ENCODE measurements at regions of chr17 and their contacts with region 1.

Region 1: DNA sequence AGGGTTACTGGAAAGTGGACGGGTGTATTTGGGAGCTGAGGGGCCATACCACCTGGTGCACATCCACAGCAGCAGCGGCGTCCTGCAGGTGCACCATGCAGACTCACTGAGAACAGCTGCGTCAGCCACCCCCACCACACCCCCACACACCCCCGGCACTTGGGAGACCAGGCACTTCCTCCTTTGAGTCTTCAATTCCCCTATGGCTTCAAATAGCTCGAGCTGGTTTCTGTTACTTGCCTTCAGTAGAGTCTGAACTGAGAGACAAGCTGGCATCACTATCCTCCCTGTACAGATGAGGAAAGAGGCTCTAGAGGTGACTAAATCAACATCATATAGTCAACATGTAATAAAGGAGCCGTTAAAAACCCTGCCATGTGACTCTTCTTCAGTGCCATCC is 15.4 kb downstream of the CUEDC1 start:
- DNase-seq: peak; percentile 66
- H3K4me3 ChIP-seq: no peak overlapping the region
- H3K27ac ChIP-seq: peak overlapping the region; percentile 91 to 99 (median 97)
- H3K4me1 ChIP-seq: peaks cover 60 to 94% (median 79%) of the 10 kb centered on the region in 4 donors
- H3K27me3 ChIP-seq: no peaks in the 10 kb centered on the region
- CTCF ChIP-seq: no peak
- EP300 ChIP-seq: no peak
- POLR2A ChIP-seq: no peak

Region 2: DNA sequence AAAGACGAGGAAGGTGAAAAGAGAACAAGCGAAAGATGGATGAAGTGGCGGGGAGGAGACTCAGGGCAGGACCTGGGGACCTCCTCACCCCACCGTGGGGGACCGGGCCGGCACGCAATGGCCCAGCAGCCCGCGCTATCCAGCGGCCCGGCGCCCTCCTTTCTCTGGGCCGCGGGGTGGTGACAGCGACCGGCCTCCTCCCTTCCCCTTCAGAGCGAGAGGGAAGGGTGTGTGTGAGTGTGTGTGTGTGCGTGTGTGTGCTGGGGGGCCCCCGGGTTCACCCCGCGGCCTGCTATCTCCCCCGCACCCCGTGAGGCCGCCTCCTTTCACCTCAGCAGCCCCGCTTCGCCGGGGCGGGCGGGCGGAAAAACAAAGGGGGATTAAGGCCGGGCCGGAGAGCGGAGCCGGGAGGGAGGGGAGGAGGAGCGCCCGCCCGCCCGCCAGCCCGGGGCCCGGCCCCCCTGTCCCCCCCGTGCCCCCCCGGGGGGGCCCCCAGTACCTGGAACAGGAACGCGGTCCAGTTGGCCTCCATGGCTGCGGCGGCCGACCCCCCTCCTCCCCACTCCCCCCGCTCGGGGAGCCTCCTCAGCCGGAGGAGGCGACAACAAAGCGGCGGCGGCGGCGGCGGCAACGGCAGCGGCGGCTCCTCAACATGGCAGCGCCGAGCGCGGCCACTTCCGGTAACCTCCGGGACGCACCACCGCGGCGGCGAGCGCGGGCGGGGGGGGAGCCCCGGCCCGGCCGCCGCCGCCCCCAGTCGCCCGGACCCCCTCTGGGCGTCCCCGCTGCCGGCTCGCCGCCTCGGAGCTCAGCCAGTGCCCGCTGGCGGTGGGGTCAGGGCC is 48.0 kb after region 1 on chr17 and contains the start of gene VEZF1:
- in situ Hi-C with region 1: no loop called
- intact Hi-C with region 1: loop called (anchors 5 kb)
- DNase-seq: peak; percentile 80
- H3K4me3 ChIP-seq: peak within 1 kb of the TSS; percentile 67 to 81 (median 78)
- H3K27ac ChIP-seq: peak within 1 kb of the TSS; percentile 93 to 97 (median 96)
- H3K4me1 ChIP-seq: peaks cover 22 to 57% (median 32%) of the 10 kb centered on the region in 4 donors
- H3K27me3 ChIP-seq: no peaks in the 10 kb centered on the region
- CTCF ChIP-seq: peak in 1 of 5 experiments; percentile 3
- EP300 ChIP-seq: no peak
- POLR2A ChIP-seq: peak; percentile 48
- total RNA-seq, gene VEZF1: 44.0 to 65.1 (median 50.1) TPM